ENCODE measurements at regions of chr11 and their contacts with region 1.

Region 1: DNA sequence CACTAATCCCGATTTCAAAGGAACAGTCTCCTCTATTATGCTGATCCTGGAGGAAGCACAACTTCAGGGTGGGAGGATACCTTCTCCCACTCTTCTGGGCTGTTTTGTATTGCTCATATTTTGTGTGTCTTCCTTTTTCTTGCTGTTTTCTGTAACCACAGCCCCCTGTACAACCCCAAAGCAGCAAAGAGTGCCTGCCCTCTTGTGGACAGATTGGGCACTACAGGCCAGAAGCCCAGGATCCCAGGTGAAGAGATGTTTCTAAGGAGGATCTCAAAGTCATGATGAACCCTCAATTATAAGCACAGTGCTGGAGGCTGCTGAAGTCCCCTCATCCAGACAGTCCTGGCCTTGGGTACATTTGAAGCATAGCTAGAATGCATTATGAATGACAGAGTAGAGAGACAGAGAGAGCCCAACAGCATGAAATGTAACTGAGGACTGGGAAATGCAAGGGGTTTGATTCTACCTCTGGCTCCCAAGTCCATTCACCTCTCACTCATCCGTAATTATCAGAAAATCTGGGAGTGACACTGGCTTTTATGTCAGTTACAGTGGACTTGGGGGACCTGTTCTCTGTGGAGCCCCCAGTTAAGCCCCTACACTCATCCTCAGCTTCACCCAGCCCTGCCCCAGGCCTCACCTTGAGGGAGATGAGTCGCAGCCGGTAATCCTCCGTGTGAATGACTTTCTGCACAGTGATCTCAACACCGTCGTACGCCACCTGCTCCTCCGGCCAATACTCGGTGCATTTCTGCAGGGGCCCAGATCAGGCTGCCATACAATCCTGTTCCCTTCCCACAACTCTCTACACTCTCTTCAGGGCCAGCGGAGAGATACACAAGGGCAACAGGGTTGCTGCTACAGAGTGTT is 6.2 kb upstream of the IGSF22 start:
- DNase-seq: peak; percentile 77
- H3K4me3 Mint-ChIP-seq: no peak overlapping the region
- H3K27ac Mint-ChIP-seq: no peak overlapping the region
- H3K4me1 Mint-ChIP-seq: peaks cover 3% of the 10 kb centered on the region
- H3K27me3 Mint-ChIP-seq: peaks cover 10% of the 10 kb centered on the region

Region 2: DNA sequence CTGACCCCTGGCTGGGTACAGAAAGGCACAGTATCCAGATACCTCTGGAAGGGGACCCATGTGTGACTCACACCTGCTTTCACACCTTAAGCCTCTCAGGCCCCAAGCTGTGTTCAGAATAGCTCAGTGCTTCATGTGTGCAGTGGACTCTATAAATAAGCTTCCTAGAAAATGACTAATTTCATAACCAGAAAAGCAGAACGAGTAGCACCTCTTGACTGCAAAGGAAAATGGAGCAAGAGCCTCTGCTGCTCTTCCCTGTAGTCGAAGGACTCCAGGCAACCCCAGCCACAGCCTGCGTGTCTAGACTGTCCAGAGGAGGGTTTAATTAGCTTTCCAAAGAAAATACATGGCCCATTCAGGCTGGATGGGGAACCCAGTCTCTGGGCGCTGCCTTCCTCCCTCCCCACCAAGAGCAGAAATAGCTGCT is 36.3 kb after region 1 on chr11:
- CTCF ChIA-PET with region 1: interaction called, 11 read pairs
- DNase-seq: no peak
- H3K4me3 Mint-ChIP-seq: no peak overlapping the region
- H3K27ac Mint-ChIP-seq: peak overlapping the region; percentile 15
- H3K4me1 Mint-ChIP-seq: peaks cover 16% of the 10 kb centered on the region
- H3K27me3 Mint-ChIP-seq: peaks cover 37% of the 10 kb centered on the region

Measured in activated naive CD4-positive, alpha-beta T cell treated with anti-CD3 and anti-CD28 coated beads, Interleukin-2, amount 10 ng/mL, durations not matched to agents 7 days and 5 days (primary cell).